Mammary epithelial cell (primary cell): ENCODE measurements at regions of chr14 and their contacts with region 1.

Region 1: DNA sequence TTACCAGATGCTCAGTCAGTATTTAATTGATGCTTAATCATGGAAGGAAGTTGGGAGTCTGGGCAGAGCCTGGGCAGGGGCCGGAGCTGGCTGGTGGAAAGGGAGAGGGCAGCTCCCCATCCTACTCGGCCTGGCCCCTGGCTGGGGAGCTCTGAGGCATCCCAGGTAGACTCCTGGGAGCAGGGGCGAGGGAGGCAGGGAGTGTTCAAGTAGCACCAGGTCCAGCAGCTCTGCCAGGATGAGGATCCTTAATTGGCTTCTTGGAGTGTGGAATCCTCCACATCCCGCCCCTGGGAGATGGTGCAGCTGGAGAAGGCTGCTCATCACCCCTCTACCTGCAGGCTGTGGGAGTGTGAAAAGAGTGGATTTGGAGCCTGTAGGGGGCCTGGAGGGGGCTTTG is 30.9 kb downstream of the SYNDIG1L start:
- DNase-seq: no peak
- H3K4me3 ChIP-seq: no peak overlapping the region
- H3K27ac ChIP-seq: no peak overlapping the region
- H3K4me1 ChIP-seq: no peaks in the 10 kb centered on the region
- H3K27me3 ChIP-seq: peaks cover 3% of the 10 kb centered on the region
- CTCF ChIP-seq: no peak

Region 2: DNA sequence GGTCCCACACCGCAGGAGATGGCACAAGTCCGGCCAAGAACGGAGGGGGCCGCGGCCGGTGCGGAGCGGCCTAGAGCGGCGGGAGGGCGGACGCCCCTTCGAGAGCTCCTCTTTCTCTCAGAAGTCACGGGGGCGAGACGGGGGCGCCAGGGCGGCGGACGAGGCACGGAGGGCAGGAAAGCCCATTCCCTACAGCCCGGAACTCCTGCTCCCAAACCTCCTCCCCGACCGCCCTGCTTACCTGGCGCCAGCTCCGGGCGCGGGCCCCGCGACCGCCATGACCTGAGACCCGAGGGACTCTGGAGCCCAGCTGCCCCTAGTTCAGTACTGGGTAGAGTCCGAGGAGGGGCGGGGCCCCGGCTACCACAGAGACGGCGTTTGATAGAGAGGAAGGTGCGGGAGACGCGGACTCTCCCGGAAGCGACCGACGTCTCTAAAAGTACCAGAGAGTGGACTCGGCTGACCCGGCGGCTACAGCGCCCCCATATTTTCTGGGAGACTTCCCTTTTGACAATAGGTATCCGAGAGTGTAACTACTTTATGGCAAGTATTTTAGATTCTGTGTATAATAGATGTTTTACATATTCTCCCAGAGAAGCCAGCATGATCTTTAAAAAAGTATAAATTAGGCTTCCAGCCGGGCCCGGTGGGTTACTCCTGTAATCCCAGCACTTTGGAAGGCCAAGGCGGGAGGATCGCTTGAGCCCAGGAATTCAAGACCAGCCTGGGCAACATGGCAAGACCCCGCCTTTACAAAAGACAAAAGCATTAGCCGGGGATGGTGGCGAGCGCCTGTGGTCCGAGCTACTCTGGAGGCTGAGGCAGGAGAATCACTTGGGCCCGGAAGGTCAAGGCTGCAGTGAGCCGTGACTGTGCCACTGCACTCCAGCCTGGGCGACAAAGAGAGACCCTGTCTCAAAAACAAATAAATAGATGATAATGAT is 92.2 kb before region 1 on chr14 and contains the start of gene ABCD4:
- CTCF ChIA-PET with region 1: no interaction called
- dilution Hi-C with region 1: loop called (anchors 5 kb)
- in situ Hi-C with region 1: no loop called
- intact Hi-C with region 1: no loop called
- DNase-seq: peak; percentile 87
- H3K4me3 ChIP-seq: peak within 1 kb of the TSS; percentile 81 to 99 (median 85)
- H3K27ac ChIP-seq: peak within 1 kb of the TSS; percentile 62
- H3K4me1 ChIP-seq: peaks cover 6% of the 10 kb centered on the region
- H3K27me3 ChIP-seq: no peaks in the 10 kb centered on the region
- CTCF ChIP-seq: peak; percentile 42 to 61
- total RNA-seq, gene ABCD4: 30.1 to 31.0 TPM

Region 3: DNA sequence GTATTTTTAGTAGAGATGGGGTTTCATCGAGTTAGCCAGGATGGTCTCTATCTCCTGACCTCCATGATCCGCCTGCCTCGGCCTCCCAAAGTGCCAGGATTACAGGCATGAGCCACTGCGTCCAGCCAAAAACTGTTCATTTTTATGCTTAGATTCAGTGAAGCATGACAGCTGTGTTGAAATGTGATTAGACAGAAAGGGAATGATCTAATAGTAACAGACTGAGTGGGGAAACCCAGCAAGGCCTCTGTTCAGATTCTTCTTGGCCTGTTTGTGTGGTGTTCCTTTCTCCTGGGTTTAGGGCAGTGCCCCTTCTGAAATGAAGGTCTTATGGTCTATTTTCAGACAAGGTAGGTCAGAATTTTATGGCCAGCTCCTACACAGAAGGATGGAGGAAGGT is 80.5 kb before region 1 on chr14:
- CTCF ChIA-PET with region 1: no interaction called
- dilution Hi-C with region 1: no loop called
- in situ Hi-C with region 1: no loop called
- intact Hi-C with region 1: no loop called
- DNase-seq: no peak
- H3K4me3 ChIP-seq: no peak overlapping the region
- H3K27ac ChIP-seq: no peak overlapping the region
- H3K4me1 ChIP-seq: no peaks in the 10 kb centered on the region
- H3K27me3 ChIP-seq: no peaks in the 10 kb centered on the region
- CTCF ChIP-seq: no peak

Region 4: GRCh38 chr14:74437496-74438053 is 42.5 kb after region 1 on chr14:
- CTCF ChIA-PET with region 1: no interaction called
- dilution Hi-C with region 1: loop called (anchors 5 kb)
- in situ Hi-C with region 1: no loop called
- intact Hi-C with region 1: no loop called
- DNase-seq: no peak
- H3K4me3 ChIP-seq: no peak overlapping the region
- H3K27ac ChIP-seq: no peak overlapping the region
- H3K4me1 ChIP-seq: no peaks in the 10 kb centered on the region
- H3K27me3 ChIP-seq: no peaks in the 10 kb centered on the region
- CTCF ChIP-seq: no peak